Activated CD4-positive, alpha-beta memory T cell treated with anti-CD3 and anti-CD28 coated beads for 36 hours (primary cell): ENCODE measurements at regions of chr5 and their contacts with region 1.

Region 1: GRCh38 chr5:39172593-39172992 is 46.8 kb downstream of the FYB1 start:
- DNase-seq: no peak
- H3K4me3 Mint-ChIP-seq: no peak overlapping the region
- H3K27ac Mint-ChIP-seq: peak overlapping the region; percentile 88
- H3K4me1 Mint-ChIP-seq: peaks cover 94% of the 10 kb centered on the region
- H3K27me3 Mint-ChIP-seq: no peaks in the 10 kb centered on the region

Region 2: GRCh38 chr5:38979535-38979934 is 193.1 kb before region 1 on chr5:
- CTCF ChIA-PET with region 1: no interaction called
- POLR2A ChIA-PET with region 1: no interaction called
- intact Hi-C with region 1: no loop called
- DNase-seq: no peak
- H3K4me3 Mint-ChIP-seq: no peak overlapping the region
- H3K27ac Mint-ChIP-seq: no peak overlapping the region
- H3K4me1 Mint-ChIP-seq: no peaks in the 10 kb centered on the region
- H3K27me3 Mint-ChIP-seq: no peaks in the 10 kb centered on the region

Region 3: GRCh38 chr5:39187831-39188731 is 15.5 kb after region 1 on chr5:
- CTCF ChIA-PET with region 1: interaction called, 38 read pairs
- POLR2A ChIA-PET with region 1: interaction called, 14 read pairs
- intact Hi-C with region 1: loop called (anchors 1 kb)
- DNase-seq: no peak
- H3K4me3 Mint-ChIP-seq: peak overlapping the region; percentile 69
- H3K27ac Mint-ChIP-seq: peak overlapping the region; percentile 92
- H3K4me1 Mint-ChIP-seq: peaks cover 79% of the 10 kb centered on the region
- H3K27me3 Mint-ChIP-seq: no peaks in the 10 kb centered on the region